ENCODE measurements at regions of chr15 and their contacts with region 1.

Region 1: DNA sequence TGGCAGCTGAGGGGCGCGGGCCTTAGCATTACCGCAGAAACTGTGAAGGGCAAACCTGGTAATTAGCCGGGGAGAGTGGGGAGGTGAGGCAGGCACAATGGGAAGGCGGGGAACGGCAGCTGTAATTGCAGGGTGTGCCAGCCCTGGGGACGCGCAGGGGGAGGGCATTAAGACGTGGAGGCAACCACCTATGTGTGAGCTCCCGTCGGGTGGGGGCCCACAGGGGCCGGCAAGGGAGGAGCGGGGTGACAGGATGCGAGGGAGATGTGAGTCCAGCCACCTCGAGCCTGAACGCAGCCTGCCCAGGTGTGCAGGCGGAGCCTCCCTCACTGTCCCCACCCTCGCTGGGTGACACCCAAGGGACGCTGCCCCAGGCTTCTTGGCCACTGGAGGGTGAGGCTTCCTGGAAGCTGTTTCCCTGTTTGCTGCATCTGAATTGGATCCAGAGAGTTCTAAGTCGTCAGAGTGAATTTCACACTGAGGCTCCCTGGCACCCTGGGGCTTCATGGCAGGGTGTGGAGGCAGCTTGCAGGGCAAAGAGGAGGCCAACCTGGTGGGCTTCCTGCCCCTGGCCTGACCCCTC is 130.6 kb upstream of the MEF2A start:
- DNase-seq: peak; percentile 77 to 95
- H3K4me3 ChIP-seq: peak overlapping the region; percentile 52
- H3K27ac ChIP-seq: peak overlapping the region; percentile 52
- H3K4me1 ChIP-seq: peaks cover 30% of the 10 kb centered on the region
- H3K27me3 ChIP-seq: no peaks in the 10 kb centered on the region
- CTCF ChIP-seq: no peak

Region 2: DNA sequence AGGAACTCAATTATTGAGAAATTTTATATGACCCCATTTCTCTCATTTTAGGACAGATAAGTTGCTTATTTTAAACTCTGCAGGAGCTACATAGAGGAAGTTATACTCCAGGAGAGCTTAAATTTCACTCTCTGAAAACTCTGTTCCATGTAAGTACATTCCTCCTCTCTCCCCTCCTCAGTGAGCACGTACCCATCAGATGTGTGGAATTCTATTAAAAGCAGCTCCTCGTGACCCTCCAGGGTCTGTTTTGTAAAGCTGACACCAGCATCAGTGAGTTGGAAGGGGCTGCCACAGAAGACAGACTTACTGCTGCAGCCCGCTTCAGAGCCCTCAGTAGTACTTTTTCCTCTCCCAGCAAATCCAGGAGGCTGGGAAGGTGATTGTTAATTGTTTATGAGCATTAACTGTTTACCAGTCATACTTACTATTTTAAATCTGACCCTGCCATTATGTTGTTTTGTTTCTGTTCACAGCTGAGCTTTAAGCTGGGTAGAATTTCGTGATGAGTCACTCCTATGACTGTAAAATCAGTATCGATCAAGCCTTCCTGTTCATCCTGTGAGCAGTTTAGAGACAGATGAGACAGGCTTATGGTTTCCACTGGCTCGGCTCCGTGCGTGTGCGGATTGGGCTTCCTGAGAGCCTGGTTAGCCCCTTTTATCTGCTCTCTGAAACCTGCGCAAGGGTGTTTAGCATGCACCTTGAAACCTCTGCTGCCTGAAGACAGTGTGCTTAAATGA is 766.5 kb before region 1 on chr15:
- CTCF ChIA-PET with region 1: no interaction called
- POLR2A ChIA-PET with region 1: no interaction called
- intact Hi-C with region 1: no loop called
- DNase-seq: peak in 1 of 2 experiments; percentile 89
- H3K4me3 ChIP-seq: peak overlapping the region; percentile 26; the same call in 1 of the 2 replicates
- H3K27ac ChIP-seq: peak overlapping the region; percentile 90
- H3K4me1 ChIP-seq: peaks cover 32% of the 10 kb centered on the region
- H3K27me3 ChIP-seq: no peaks in the 10 kb centered on the region
- CTCF ChIP-seq: no peak

Region 3: DNA sequence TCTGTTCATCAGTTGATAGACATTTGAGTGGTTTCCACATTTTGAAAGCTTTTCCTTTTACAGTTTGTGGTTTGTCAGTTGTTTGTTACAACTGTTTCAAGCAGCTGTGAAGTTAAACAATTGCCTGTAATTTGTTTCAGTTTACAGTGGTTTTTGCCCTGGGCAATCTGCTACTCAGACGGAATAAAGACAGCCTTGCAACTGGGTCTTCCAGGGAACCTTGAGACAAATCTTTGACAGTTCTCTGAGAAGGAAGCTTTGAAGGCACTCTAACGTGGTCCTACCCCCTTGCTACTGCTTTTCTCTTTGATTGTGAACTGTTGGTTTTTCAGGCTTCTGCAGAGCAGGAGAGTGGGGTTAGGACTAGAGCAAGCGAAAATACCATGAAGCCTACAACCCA is 155.9 kb before region 1 on chr15:
- CTCF ChIA-PET with region 1: no interaction called
- POLR2A ChIA-PET with region 1: no interaction called
- intact Hi-C with region 1: no loop called
- DNase-seq: no peak
- H3K4me3 ChIP-seq: no peak overlapping the region
- H3K27ac ChIP-seq: no peak overlapping the region
- H3K4me1 ChIP-seq: no peaks in the 10 kb centered on the region
- H3K27me3 ChIP-seq: no peaks in the 10 kb centered on the region
- CTCF ChIP-seq: no peak

Region 4: DNA sequence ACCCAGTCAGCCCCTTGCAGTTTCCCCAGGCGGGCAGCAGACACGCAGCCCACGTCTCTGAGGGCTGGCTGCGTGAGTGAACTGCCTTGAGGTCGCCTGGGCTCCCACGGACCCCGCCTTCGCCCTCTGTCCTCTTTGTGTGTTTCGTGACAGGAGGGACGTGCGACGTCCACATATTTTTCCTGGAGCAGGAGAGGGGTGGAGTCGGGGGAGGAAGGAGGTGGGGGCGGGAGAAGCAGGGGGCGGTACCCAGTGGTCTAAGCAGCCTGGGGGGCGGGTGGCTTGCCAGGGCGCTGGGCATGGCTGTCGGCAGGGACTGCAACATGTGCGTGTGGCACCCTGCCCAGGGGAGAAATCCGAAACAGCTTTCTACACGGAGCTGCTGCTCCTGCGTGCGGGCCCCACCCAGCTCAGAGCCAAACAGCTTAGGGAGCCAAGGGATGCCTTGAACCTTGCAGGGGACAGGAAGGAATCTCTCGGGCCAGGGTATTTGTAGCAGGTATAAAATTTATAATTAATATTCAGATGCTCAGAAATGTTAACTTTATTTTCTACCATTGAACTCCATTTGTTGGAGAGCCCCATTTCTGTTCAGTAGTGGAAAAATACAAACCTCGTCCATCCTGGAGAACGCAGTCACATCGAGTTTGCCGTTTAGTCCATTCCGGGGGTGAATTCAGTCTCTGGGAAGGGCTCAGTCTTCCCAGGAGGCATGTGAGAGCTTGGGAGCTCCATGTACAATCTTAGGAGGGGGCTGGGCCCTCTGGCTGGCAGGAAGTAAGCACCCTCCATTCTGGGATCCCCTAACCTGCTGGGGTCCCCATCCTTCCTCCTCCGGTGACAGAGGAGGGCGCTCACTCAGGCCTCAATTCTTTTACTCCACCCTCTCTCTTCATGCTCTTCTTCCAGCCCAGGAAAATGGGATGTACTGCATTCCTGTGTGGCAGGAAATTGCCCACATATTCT is 51.5 kb after region 1 on chr15:
- CTCF ChIA-PET with region 1: no interaction called
- POLR2A ChIA-PET with region 1: interaction called, 8 read pairs
- intact Hi-C with region 1: loop called (anchors 2 kb)
- DNase-seq: peak; percentile 52 to 78
- H3K4me3 ChIP-seq: peak overlapping the region; percentile 46; the same call in 1 of the 2 replicates
- H3K27ac ChIP-seq: no peak overlapping the region
- H3K4me1 ChIP-seq: peaks cover 9% of the 10 kb centered on the region; the same call in 1 of the 2 replicates
- H3K27me3 ChIP-seq: no peaks in the 10 kb centered on the region
- CTCF ChIP-seq: no peak